ENCODE measurements at regions of chr3 and their contacts with region 1.

Region 1: DNA sequence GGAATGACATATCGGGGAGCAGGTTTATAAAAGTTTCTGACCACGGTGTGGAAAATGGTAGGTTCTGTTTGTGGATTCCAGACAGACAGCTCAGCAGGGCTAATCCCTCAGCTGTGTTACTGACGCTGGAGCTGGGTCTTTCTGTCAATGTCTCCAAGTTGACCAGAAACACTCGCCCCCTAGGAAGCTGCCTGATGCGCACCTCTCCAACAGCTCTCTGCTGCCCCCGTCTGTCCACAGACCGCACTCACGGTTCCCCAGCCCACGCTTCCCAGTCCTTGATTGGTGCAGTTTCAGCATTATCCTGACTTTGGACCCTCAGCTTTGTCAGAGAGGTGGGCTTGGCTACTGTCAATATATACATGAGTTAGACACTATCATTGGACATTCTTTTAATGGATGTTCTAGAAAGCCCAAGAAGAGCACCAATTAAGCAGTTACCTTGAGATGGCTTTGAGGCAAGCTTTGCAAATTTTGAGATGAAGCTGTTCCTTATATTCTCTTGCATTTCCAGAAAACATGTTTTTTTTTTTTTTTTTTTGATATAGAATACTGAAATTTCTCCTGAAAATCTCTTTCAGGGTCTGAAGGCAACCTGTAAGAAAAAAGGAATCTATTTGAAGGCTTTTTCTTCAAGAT is 98.9 kb upstream of the TBC1D5 start:
- DNase-seq: peak; percentile 73
- H3K4me3 ChIP-seq: no peak overlapping the region
- H3K27ac ChIP-seq: no peak overlapping the region
- H3K4me1 ChIP-seq: no peaks in the 10 kb centered on the region
- CTCF ChIP-seq: peak; percentile 98

Region 2: GRCh38 chr3:17258823-17259436 is 582.4 kb before region 1 on chr3:
- CTCF ChIA-PET with region 1: no interaction called
- POLR2A ChIA-PET with region 1: no interaction called
- intact Hi-C with region 1: loop called (anchors 2 kb)
- DNase-seq: peak; percentile 64
- H3K4me3 ChIP-seq: no peak overlapping the region
- H3K27ac ChIP-seq: no peak overlapping the region
- H3K4me1 ChIP-seq: no peaks in the 10 kb centered on the region
- CTCF ChIP-seq: peak; percentile 94

Region 3: GRCh38 chr3:17431004-17431403 is 410.3 kb before region 1 on chr3:
- CTCF ChIA-PET with region 1: interaction called, 8 read pairs
- POLR2A ChIA-PET with region 1: interaction called, 6 read pairs
- intact Hi-C with region 1: loop called (anchors 1 kb)
- DNase-seq: peak; percentile 29
- H3K4me3 ChIP-seq: no peak overlapping the region
- H3K27ac ChIP-seq: no peak overlapping the region
- H3K4me1 ChIP-seq: no peaks in the 10 kb centered on the region
- CTCF ChIP-seq: peak; percentile 77

Region 4: GRCh38 chr3:17645072-17645698 is 196.1 kb before region 1 on chr3:
- CTCF ChIA-PET with region 1: interaction called, 3 read pairs
- POLR2A ChIA-PET with region 1: no interaction called
- intact Hi-C with region 1: loop called (anchors 1 kb)
- DNase-seq: peak; percentile 45
- H3K4me3 ChIP-seq: no peak overlapping the region
- H3K27ac ChIP-seq: no peak overlapping the region
- H3K4me1 ChIP-seq: no peaks in the 10 kb centered on the region
- CTCF ChIP-seq: peak; percentile 88

Measured in OCI-LY7 (cell line).